Activated CD4-positive, alpha-beta T cell treated with anti-CD3 and anti-CD28 coated beads for 36 hours (primary cell): ENCODE measurements at regions of chr16 and their contacts with region 1.

Region 1: GRCh38 chr16:50665128-50665878 is 15.8 kb downstream of the SNX20 start:
- DNase-seq: peak; percentile 90
- ATAC-seq: peak; percentile 43
- H3K4me3 Mint-ChIP-seq: peak overlapping the region; percentile 60
- H3K27ac Mint-ChIP-seq: peak overlapping the region; percentile 79
- H3K4me1 Mint-ChIP-seq: peaks cover 37% of the 10 kb centered on the region
- H3K27me3 Mint-ChIP-seq: no peaks in the 10 kb centered on the region

Region 2: GRCh38 chr16:50210266-50211038 is 454.9 kb before region 1 on chr16:
- CTCF ChIA-PET with region 1: interaction called, 7 read pairs
- POLR2A ChIA-PET with region 1: no interaction called
- intact Hi-C with region 1: loop called (anchors 1 to 10 kb)
- DNase-seq: peak; percentile 85
- ATAC-seq: peak; percentile 98
- H3K4me3 Mint-ChIP-seq: no peak overlapping the region
- H3K27ac Mint-ChIP-seq: peak overlapping the region; percentile 84
- H3K4me1 Mint-ChIP-seq: peaks cover 36% of the 10 kb centered on the region
- H3K27me3 Mint-ChIP-seq: no peaks in the 10 kb centered on the region

Region 3: GRCh38 chr16:50360033-50360778 is 305.1 kb before region 1 on chr16:
- CTCF ChIA-PET with region 1: interaction called, 13 read pairs
- POLR2A ChIA-PET with region 1: no interaction called
- intact Hi-C with region 1: loop called in 1 of 2 experiments (anchors 5 kb)
- DNase-seq: no peak
- ATAC-seq: no peak
- H3K4me3 Mint-ChIP-seq: no peak overlapping the region
- H3K27ac Mint-ChIP-seq: peak overlapping the region; percentile 45
- H3K4me1 Mint-ChIP-seq: peaks cover 49% of the 10 kb centered on the region
- H3K27me3 Mint-ChIP-seq: no peaks in the 10 kb centered on the region

Region 4: DNA sequence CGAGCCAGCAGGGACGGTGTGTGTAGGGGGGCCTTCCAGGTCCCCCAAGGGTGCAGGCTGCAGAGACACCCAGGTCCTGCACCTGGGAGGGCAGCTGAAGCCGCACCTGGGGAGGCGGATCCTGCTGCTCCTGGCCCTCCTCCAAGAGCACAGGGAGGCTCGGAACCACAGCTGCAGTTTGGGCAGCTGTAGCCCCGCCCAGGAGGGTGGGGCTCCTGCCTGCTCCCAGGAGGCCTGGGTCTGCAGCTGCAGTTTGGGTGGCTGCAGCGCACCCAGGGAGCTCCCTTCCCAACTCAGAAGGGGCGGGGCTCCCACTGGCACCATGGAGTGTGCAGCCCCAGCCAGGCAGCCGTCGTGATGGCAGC is 186.6 kb before region 1 on chr16:
- CTCF ChIA-PET with region 1: no interaction called
- POLR2A ChIA-PET with region 1: no interaction called
- intact Hi-C with region 1: no loop called
- DNase-seq: no peak
- ATAC-seq: no peak
- H3K4me3 Mint-ChIP-seq: no peak overlapping the region
- H3K27ac Mint-ChIP-seq: no peak overlapping the region
- H3K4me1 Mint-ChIP-seq: peaks cover 13% of the 10 kb centered on the region
- H3K27me3 Mint-ChIP-seq: no peaks in the 10 kb centered on the region

Region 5: GRCh38 chr16:50613281-50613963 is 51.9 kb before region 1 on chr16:
- CTCF ChIA-PET with region 1: interaction called, 11 read pairs
- POLR2A ChIA-PET with region 1: no interaction called
- intact Hi-C with region 1: no loop called
- DNase-seq: no peak
- ATAC-seq: no peak
- H3K4me3 Mint-ChIP-seq: no peak overlapping the region
- H3K27ac Mint-ChIP-seq: no peak overlapping the region
- H3K4me1 Mint-ChIP-seq: peaks cover 23% of the 10 kb centered on the region
- H3K27me3 Mint-ChIP-seq: no peaks in the 10 kb centered on the region

Region 6: GRCh38 chr16:50696575-50697420 is 31.5 kb after region 1 on chr16:
- CTCF ChIA-PET with region 1: interaction called, 10 read pairs
- POLR2A ChIA-PET with region 1: interaction called, 3 read pairs
- intact Hi-C with region 1: no loop called
- DNase-seq: peak; percentile 81
- ATAC-seq: peak; percentile 51
- H3K4me3 Mint-ChIP-seq: peak overlapping the region; percentile 71
- H3K27ac Mint-ChIP-seq: peak overlapping the region; percentile 88
- H3K4me1 Mint-ChIP-seq: peaks cover 83% of the 10 kb centered on the region
- H3K27me3 Mint-ChIP-seq: no peaks in the 10 kb centered on the region

Region 7: DNA sequence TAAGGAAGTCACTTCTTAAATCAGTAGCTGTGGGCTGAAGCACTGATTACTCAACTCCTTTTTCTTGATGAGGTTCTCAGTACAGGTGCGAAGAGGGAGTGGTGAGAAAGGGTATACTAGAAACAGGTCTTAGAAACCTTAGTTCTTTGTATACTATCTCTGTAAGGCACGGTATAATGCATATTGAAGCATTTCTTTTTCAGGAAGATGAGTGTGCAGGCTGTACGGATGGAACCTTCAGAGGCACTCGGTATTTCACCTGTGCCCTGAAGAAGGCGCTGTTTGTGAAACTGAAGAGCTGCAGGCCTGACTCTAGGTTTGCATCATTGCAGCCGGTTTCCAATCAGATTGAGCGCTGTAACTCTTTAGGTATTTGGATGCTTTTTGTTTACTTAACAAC is 115.7 kb after region 1 on chr16:
- CTCF ChIA-PET with region 1: interaction called, 10 read pairs
- POLR2A ChIA-PET with region 1: no interaction called
- intact Hi-C with region 1: no loop called
- DNase-seq: peak; percentile 49
- ATAC-seq: peak; percentile 64
- H3K4me3 Mint-ChIP-seq: no peak overlapping the region
- H3K27ac Mint-ChIP-seq: peak overlapping the region; percentile 77
- H3K4me1 Mint-ChIP-seq: peaks cover 55% of the 10 kb centered on the region
- H3K27me3 Mint-ChIP-seq: no peaks in the 10 kb centered on the region

Region 8: GRCh38 chr16:51193879-51194278 is 528.6 kb after region 1 on chr16:
- CTCF ChIA-PET with region 1: no interaction called
- POLR2A ChIA-PET with region 1: no interaction called
- intact Hi-C with region 1: no loop called
- DNase-seq: no peak
- ATAC-seq: no peak
- H3K4me3 Mint-ChIP-seq: no peak overlapping the region
- H3K27ac Mint-ChIP-seq: no peak overlapping the region
- H3K4me1 Mint-ChIP-seq: no peaks in the 10 kb centered on the region
- H3K27me3 Mint-ChIP-seq: peaks cover 8% of the 10 kb centered on the region

Region 9: GRCh38 chr16:51306116-51306515 is 640.8 kb after region 1 on chr16:
- CTCF ChIA-PET with region 1: no interaction called
- POLR2A ChIA-PET with region 1: no interaction called
- intact Hi-C with region 1: no loop called
- DNase-seq: no peak
- ATAC-seq: no peak
- H3K4me3 Mint-ChIP-seq: no peak overlapping the region
- H3K27ac Mint-ChIP-seq: no peak overlapping the region
- H3K4me1 Mint-ChIP-seq: no peaks in the 10 kb centered on the region
- H3K27me3 Mint-ChIP-seq: peaks cover 2% of the 10 kb centered on the region